Activated CD4-positive, alpha-beta memory T cell treated with anti-CD3 and anti-CD28 coated beads for 36 hours (primary cell): ENCODE measurements at regions of chr22 and their contacts with region 1.

Region 1: DNA sequence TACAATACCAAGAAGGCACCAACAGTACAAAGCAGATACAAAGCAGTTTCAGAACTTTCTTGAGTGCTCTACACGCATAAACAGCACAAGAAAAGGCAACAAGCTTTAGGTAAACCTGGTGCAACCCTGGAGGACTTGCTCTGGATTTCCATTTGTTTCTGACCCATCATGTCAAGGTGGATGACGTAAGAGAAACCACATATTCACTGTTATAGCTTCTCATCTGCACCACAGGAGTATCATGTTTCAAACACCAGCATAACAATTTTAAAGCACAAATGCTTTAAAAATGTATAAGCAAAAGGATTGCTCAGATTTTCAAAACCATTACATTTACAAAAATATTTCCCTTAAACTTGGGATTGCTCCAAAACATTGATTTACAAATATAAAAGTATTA is 25.0 kb upstream of the YPEL1 start:
- DNase-seq: no peak
- H3K4me3 Mint-ChIP-seq: no peak overlapping the region
- H3K27ac Mint-ChIP-seq: no peak overlapping the region
- H3K4me1 Mint-ChIP-seq: peaks cover 58% of the 10 kb centered on the region
- H3K27me3 Mint-ChIP-seq: peaks cover 4% of the 10 kb centered on the region

Region 2: GRCh38 chr22:21745948-21746347 is 14.7 kb before region 1 on chr22:
- CTCF ChIA-PET with region 1: no interaction called
- POLR2A ChIA-PET with region 1: no interaction called
- intact Hi-C with region 1: no loop called
- DNase-seq: no peak
- H3K4me3 Mint-ChIP-seq: no peak overlapping the region
- H3K27ac Mint-ChIP-seq: no peak overlapping the region
- H3K4me1 Mint-ChIP-seq: no peaks in the 10 kb centered on the region
- H3K27me3 Mint-ChIP-seq: no peaks in the 10 kb centered on the region

Region 3: DNA sequence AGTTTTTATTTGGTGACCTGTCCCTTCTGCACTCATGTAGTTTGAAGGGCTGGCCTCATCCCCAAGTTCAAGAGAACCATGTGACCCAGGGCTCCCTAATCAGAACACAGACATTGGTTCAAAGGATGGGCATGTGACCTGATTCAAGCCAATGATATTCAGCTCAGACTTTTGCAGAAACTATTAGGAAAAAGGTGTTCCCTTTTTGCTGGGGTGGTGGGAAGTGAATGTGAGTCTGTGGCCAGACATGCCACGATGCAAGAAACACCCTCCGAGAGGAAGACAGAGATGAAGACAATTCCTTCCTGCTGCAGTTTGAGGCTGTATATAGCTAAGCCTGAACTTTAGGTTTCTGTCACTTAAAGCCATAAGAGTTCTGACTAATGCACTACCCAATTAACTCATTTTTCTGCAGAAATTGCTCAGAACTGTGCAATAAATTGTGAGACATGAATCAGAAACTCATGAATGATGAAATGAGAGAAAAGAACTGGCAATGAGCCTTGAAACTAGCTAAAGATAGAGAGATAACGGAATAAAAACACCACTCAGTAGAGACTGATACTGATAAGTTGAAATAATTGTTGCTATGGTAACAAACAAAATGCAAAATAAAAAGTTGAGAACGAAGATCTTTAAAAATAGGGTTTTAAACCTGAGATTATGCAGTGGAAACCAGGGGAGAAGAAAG is 116.0 kb after region 1 on chr22:
- CTCF ChIA-PET with region 1: interaction called, 11 read pairs
- POLR2A ChIA-PET with region 1: interaction called, 20 read pairs
- intact Hi-C with region 1: no loop called
- DNase-seq: peak; percentile 67
- H3K4me3 Mint-ChIP-seq: no peak overlapping the region
- H3K27ac Mint-ChIP-seq: peak overlapping the region; percentile 72
- H3K4me1 Mint-ChIP-seq: peaks cover 20% of the 10 kb centered on the region
- H3K27me3 Mint-ChIP-seq: peaks cover 8% of the 10 kb centered on the region